ENCODE measurements at regions of chr2 and their contacts with region 1.

Region 1: DNA sequence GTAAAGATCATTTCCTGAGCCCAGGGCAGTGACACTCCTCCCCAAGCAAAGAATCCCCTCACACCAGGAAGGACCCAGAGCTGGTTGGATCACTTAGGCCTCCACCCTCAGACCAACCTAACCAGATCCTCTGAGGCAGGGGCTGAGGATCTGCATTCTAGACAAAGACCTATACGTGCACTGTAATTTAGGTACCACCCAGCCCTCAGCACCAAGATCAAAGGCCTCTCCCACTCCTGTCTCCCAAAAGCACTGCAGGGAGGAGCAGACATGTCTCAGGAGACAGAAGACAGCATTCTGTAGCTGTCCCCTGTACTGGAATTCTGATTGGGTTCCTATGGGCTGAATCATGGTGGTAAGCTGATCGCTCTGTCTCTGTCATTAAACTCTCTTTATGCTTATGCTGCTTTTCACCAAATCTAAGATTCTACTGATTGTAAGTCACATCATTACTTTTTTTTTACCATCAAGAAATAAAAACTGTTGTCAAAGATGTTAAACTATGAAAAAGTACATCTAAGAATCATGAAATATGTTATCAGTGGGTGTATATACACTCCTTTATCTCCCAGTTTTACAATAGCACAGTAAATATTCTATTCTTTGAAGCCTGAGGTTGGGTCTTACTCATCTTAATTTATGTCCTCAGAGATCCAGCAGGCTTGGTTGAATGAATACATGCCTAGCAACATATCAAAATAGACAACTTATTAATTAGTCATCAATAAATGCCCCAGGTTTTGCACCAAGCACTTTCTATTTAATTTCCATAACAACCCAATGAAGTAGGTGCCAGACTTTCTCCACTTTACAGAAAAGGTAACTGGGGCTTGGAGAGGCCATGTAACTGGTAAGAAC is 28.3 kb downstream of the MCFD2 start:
- DNase-seq: no peak
- ATAC-seq: no peak
- H3K4me3 ChIP-seq: no peak overlapping the region
- H3K27ac ChIP-seq: peak overlapping the region; percentile 87 to 91
- H3K4me1 ChIP-seq: peaks cover 51% of the 10 kb centered on the region
- CTCF ChIP-seq: no peak
- EP300 ChIP-seq: no peak
- POLR2A ChIP-seq: no peak
- RAD21 ChIP-seq: no peak

Region 2: DNA sequence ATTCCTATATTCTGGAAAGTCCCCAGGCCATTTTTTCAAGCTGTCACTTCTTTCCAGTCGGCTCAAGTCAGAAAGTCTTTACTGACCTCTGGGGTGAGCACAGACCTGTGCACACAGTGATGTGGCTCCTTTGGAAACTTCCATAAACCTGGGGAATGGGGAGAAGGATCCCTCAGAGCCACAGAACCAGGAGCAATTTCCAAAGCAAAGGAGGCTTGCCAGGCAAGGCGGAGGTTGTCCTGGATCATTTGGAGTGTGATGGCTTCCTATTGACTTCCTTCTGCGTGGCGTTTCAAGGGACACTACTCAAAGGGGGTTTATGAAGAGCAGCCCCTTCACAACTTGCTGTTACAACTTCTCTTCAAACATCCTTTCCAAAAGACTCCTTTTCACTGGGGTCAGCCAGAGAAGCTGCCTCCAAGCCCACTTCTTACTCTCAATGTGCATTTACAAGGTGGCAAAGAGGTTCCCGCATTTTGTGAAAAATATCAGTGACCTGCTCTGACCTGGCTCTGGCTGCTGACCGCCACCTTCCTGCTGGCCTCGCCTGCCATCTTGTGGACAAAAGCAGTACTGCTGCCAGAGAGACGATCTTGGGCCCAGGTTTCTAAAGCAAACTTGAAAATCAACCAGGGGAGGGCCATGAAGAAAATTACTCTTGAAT is 426.1 kb before region 1 on chr2:
- CTCF ChIA-PET with region 1: interaction called, 12 read pairs
- POLR2A ChIA-PET with region 1: no interaction called
- DNase-seq: peak; percentile 66 to 76
- ATAC-seq: peak; percentile 40 to 78; a peak in 4 of 6 replicates
- H3K4me3 ChIP-seq: no peak overlapping the region
- H3K27ac ChIP-seq: peak overlapping the region; percentile 29 to 79
- H3K4me1 ChIP-seq: peaks cover 16% of the 10 kb centered on the region
- CTCF ChIP-seq: peak; percentile 98
- EP300 ChIP-seq: no peak
- POLR2A ChIP-seq: no peak
- RAD21 ChIP-seq: peak; percentile 100

Region 3: GRCh38 chr2:46663614-46664013 is 223.6 kb before region 1 on chr2:
- CTCF ChIA-PET with region 1: interaction called, 10 read pairs
- POLR2A ChIA-PET with region 1: no interaction called
- DNase-seq: no peak
- ATAC-seq: no peak
- H3K4me3 ChIP-seq: no peak overlapping the region
- H3K27ac ChIP-seq: peak overlapping the region in 1 of 2 experiments; percentile 25; a peak in 1 of 6 replicates
- H3K4me1 ChIP-seq: 0 out of 3 replicates have a peak, but pooled peaks cover 7% of the 10 kb centered on the region
- CTCF ChIP-seq: no peak
- EP300 ChIP-seq: no peak
- POLR2A ChIP-seq: no peak
- RAD21 ChIP-seq: no peak

Region 4: DNA sequence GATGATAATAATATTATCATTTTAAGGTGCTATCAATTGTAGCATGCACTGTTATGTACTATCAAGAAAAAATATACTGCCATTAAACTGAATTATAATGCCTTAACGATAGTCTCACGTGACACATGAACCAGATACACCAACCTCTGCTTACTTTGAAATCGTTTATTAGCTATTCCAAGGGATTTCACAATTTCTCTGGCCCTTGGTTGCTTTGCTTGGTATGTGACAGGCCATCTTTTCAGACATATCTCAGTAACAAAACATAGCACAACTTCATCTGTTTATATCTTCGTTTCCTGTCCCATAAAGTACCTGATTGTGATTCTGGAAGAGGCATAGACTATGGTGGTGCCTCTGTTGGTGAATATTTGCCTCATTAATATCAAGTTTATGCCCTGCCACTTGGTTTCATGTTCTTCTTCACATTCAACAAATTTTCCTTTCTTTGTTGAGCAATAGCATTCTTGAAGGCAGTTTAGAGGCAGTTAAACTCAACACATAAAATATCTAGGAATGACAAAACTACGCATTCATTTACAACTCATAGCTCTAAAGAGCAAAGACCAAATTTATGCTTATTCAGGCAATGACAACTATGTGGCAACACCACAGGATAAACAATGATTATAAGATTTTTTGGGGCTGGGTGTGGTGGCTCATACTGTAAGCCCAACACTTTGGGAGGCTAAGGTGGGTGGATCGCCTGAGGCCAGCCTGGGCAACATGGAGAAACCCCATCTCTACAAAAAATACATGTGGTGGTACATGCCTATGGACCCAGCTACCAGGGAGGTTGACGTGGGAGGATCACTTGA is 56.0 kb before region 1 on chr2:
- CTCF ChIA-PET with region 1: no interaction called
- POLR2A ChIA-PET with region 1: no interaction called
- DNase-seq: no peak
- ATAC-seq: no peak
- H3K4me3 ChIP-seq: no peak overlapping the region
- H3K27ac ChIP-seq: peak overlapping the region in 1 of 2 experiments; percentile 22; a peak in 2 of 6 replicates
- H3K4me1 ChIP-seq: peaks cover 15% of the 10 kb centered on the region; the same call in 1 of the 3 replicates
- CTCF ChIP-seq: no peak
- EP300 ChIP-seq: no peak
- POLR2A ChIP-seq: no peak
- RAD21 ChIP-seq: no peak

Region 5: GRCh38 chr2:46850777-46851176 is 36.5 kb before region 1 on chr2:
- CTCF ChIA-PET with region 1: interaction called, 10 read pairs
- POLR2A ChIA-PET with region 1: no interaction called
- DNase-seq: peak in 1 of 2 experiments; percentile 56
- ATAC-seq: peak in 1 of 2 experiments; percentile 8; a peak in 2 of 6 replicates
- H3K4me3 ChIP-seq: no peak overlapping the region
- H3K27ac ChIP-seq: peak overlapping the region; percentile 97 to 99
- H3K4me1 ChIP-seq: peaks cover 78% of the 10 kb centered on the region
- CTCF ChIP-seq: no peak
- EP300 ChIP-seq: no peak
- POLR2A ChIP-seq: no peak
- RAD21 ChIP-seq: no peak

Region 6: DNA sequence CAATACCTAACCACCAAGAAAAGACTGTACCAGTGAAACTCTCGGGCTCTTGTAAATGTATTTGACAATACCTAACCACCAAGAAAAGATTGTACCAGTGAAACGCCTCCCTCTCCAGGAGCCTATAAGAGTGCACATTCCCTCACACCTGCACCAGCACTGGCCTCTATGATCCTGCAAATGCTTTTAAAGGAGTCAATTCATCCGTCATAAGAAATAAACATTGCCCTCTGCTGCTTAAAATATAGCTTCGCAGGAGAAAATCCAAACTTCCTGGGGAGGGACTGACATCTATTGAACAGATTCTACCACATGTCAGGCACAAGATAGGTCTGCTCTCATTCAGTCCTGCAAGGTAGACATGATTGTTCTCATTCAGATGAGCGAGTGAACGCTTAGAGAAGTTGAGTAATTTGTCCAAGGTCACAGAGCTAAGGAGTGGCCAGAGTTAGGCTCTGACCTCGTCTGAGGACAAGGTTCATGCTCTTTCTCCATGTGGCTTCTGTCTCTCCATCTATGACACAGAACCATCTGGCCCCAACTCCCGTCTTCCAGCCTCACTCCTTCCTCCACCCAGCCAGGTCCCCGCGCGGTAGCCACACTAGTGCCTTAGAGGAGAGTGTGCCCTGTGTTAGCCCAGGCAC is 10.4 kb before region 1 on chr2:
- CTCF ChIA-PET with region 1: interaction called, 12 read pairs
- POLR2A ChIA-PET with region 1: no interaction called
- DNase-seq: peak; percentile 82 to 91
- ATAC-seq: peak; percentile 55 to 67
- H3K4me3 ChIP-seq: no peak overlapping the region
- H3K27ac ChIP-seq: peak overlapping the region; percentile 87 to 91
- H3K4me1 ChIP-seq: peaks cover 82% of the 10 kb centered on the region
- CTCF ChIP-seq: peak; percentile 85
- EP300 ChIP-seq: no peak
- POLR2A ChIP-seq: no peak
- RAD21 ChIP-seq: peak; percentile 91 to 95

Region 7: DNA sequence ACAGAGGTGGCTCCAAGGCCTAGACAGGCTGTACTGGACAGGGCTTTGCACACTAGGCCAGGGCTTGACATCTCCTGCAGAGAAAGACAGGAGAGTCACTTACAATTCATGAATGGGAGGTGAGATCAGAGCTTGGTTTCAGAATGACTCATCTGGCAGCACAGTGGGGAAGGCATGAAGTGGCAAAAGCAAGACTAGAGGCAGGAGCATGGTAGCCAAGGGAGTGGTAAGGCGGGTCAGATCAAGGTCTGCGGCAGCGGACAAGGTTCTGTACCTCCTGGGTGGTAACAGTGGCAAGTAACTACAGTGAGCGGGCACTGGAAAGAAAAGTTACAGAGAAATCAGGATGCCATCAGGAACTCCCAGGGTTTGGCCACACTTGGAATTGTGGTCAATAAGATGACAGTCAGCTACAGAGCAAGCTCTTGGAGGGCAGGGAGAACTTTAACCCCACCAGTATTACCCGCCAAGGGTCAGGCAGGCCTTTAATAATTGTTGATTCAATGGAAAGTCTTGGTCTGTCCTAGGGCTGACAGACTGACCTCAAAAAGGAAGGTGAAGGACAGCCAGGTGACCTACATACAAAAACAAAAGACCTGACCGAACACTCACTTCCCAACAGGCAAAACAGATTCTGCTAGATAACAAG is 22.6 kb after region 1 on chr2:
- CTCF ChIA-PET with region 1: interaction called, 24 read pairs
- POLR2A ChIA-PET with region 1: no interaction called
- DNase-seq: peak; percentile 75 to 85
- ATAC-seq: peak; percentile 90 to 91
- H3K4me3 ChIP-seq: no peak overlapping the region
- H3K27ac ChIP-seq: peak overlapping the region; percentile 69 to 86
- H3K4me1 ChIP-seq: peaks cover 51% of the 10 kb centered on the region
- CTCF ChIP-seq: no peak
- EP300 ChIP-seq: peak in 1 of 2 experiments; percentile 60; a peak in 2 of 5 replicates
- POLR2A ChIP-seq: no peak
- RAD21 ChIP-seq: 0 out of 5 replicates have a peak, but pooled peaks of 1 of the 2 experiments have one; percentile 9

Region 8: DNA sequence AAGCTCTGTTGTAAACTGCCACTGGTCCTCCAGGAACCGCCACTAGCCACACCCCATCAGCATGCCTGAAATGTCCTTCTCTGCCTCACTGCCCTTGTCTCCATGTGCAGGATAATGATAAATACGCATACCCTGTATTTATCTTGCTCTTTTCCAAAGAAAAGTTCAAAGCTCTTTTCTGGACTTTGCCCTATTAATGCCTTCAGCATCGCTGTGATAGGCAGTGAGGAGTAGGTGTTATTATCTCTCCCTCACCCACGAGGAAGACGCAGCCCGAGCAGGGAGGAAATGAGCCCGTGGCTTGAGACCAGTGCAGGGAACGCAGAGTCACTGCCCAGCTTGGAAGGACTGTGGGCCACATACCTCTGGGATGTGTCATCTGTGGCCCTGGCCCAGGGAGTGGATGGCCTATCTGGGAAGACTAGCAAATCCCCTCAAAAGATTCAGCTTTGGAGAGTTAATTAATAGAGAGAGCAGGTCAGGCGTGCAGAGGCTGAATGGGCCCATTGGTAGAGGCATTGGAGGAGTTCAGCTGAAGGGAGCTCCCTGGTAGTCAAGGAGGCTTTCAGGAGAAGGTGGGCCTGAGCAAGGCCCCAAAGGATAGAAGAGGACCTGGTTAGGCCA is 67.8 kb after region 1 on chr2:
- CTCF ChIA-PET with region 1: no interaction called
- POLR2A ChIA-PET with region 1: no interaction called
- DNase-seq: peak; percentile 86 to 89
- ATAC-seq: peak; percentile 85 to 90
- H3K4me3 ChIP-seq: no peak overlapping the region
- H3K27ac ChIP-seq: peak overlapping the region; percentile 77 to 85
- H3K4me1 ChIP-seq: peaks cover 55% of the 10 kb centered on the region
- CTCF ChIP-seq: no peak
- EP300 ChIP-seq: no peak
- POLR2A ChIP-seq: no peak
- RAD21 ChIP-seq: 0 out of 5 replicates have a peak, but pooled peaks of 1 of the 2 experiments have one; percentile 25

Region 9: GRCh38 chr2:47402805-47403608 is 515.8 kb after region 1 on chr2 and contains the start of gene MSH2:
- CTCF ChIA-PET with region 1: no interaction called
- POLR2A ChIA-PET with region 1: no interaction called
- DNase-seq: peak; percentile 97 to 100
- ATAC-seq: peak; percentile 97
- H3K4me3 ChIP-seq: peak within 1 kb of the TSS; percentile 83
- H3K27ac ChIP-seq: peak within 1 kb of the TSS; percentile 83 to 93
- H3K4me1 ChIP-seq: peaks cover 11% of the 10 kb centered on the region; the same call in 1 of the 3 replicates
- CTCF ChIP-seq: no peak
- EP300 ChIP-seq: no peak
- POLR2A ChIP-seq: peak; percentile 78
- RAD21 ChIP-seq: no peak
- polyA plus RNA-seq, gene MSH2: 46.2 and 59.0 TPM in 2 replicates

Measured in A549 (cell line).